Activated B cell treated with CpG ODN at 0.5 μM for 24 hours (primary cell): ENCODE measurements at regions of chr1 and their contacts with region 1.

Region 1: DNA sequence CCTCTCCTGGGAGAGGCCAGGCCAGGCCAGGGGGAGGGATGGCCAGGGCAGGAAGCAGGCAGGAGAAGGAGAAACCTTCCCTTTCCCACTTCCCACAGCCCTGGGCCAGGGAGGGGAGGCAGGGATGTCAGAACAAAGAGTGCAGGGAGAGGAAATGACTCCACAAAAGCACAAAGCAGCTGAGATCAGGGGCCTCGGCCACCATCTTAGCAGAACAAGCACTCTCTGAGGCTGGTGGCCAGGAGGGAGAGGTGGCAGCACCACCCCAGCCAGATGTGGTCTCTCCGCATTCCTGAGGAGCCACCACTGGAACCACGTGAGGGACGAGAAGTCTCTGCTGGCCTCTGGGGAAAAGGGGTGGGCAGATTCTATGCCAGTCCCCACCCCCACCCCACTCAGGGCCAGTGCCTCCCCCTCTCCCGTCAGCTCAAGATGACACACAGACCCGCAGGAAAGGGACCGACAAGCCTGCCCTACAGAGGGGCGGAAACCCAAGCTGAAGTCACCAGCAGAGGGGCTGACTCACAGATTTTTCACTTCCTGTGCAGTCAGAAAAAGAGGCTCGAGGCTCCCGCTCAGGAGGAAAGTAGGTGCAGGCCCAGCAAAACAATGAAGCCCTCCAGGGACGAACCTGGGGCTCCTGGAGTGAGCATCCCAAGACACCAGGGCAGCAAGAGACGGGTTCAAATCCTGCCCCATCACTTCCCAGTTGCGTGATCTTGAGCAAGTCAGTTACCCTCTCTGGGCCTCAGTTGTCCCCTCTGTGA is 24.1 kb upstream of the ALDH4A1 start:
- DNase-seq: peak; percentile 58
- ATAC-seq: peak; percentile 86
- H3K4me3 Mint-ChIP-seq: peak overlapping the region; percentile 79
- H3K27ac Mint-ChIP-seq: peak overlapping the region; percentile 95
- H3K4me1 Mint-ChIP-seq: peaks cover 74% of the 10 kb centered on the region
- H3K27me3 Mint-ChIP-seq: no peaks in the 10 kb centered on the region
- CTCF ChIP-seq: no peak

Region 2: DNA sequence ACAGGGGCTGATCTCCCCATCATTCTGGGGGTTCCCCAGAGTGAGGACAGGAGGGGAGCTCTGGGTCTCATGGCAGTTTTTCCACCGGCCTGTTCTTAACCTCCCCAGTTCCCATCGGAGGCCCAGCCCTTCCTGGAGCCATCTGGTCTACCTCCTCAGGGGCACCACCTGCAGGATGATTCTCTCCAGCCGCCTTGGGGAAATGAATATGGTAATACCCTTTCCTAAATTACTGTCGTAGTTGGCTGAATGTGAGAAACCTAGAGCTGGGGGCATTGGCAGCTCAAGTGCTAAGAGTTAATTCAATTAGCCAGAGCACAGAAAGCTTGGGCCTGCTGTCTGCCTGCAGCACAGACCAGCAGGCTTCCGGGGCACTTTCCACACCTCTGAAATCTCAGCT is 131.9 kb before region 1 on chr1:
- CTCF ChIA-PET with region 1: no interaction called
- POLR2A ChIA-PET with region 1: no interaction called
- intact Hi-C with region 1: no loop called
- DNase-seq: no peak
- ATAC-seq: no peak
- H3K4me3 Mint-ChIP-seq: no peak overlapping the region
- H3K27ac Mint-ChIP-seq: no peak overlapping the region
- H3K4me1 Mint-ChIP-seq: no peaks in the 10 kb centered on the region
- H3K27me3 Mint-ChIP-seq: peaks cover 27% of the 10 kb centered on the region
- CTCF ChIP-seq: no peak

Region 3: GRCh38 chr1:18907917-18908845 is 18.3 kb before region 1 on chr1:
- CTCF ChIA-PET with region 1: interaction called, 53 read pairs
- POLR2A ChIA-PET with region 1: interaction called, 13 read pairs
- intact Hi-C with region 1: loop called (anchors 1 kb)
- DNase-seq: no peak
- ATAC-seq: peak; percentile 69
- H3K4me3 Mint-ChIP-seq: peak overlapping the region; percentile 70
- H3K27ac Mint-ChIP-seq: peak overlapping the region; percentile 83
- H3K4me1 Mint-ChIP-seq: peaks cover 35% of the 10 kb centered on the region
- H3K27me3 Mint-ChIP-seq: no peaks in the 10 kb centered on the region
- CTCF ChIP-seq: no peak

Region 4: DNA sequence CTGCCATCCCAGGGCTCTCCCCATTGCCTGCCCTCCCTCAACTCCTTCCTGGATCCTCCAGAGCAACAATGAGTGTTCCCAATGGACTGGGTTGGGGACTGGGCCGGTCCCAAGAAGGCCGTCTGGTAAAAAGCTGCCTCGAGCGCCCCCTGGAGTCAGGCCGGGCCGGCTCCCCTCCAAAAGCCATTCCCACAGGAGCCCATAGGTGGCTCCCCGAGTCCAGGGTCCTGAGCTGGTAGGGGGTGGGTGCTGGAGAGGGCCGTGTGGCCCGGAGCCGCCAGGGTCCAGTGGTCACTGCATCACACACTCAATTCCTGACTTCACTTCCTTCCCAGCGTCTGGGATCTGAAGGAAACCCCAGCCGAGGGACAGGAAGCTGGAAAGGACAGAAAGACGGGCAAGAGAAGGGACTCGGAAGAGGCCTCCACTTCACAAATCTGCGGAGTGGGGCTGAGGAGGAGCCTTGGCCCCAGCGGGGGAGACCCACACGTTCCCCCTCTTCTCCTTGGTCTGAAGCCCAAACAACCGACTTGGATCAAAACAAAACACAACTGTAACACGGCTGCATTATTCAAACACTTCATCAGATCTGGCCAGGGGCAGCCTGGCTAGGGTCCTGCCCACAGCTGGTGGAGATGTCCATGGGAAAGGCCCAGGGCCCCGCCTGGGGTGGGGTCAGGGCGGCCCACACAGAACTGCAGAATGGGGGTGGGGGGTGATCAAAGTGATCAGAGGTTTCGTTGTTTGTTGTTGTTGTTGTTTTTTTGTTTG is 13.2 kb before region 1 on chr1:
- CTCF ChIA-PET with region 1: interaction called, 53 read pairs
- POLR2A ChIA-PET with region 1: interaction called, 11 read pairs
- intact Hi-C with region 1: loop called (anchors 1 kb)
- DNase-seq: peak; percentile 73
- ATAC-seq: peak; percentile 93
- H3K4me3 Mint-ChIP-seq: no peak overlapping the region
- H3K27ac Mint-ChIP-seq: no peak overlapping the region
- H3K4me1 Mint-ChIP-seq: peaks cover 18% of the 10 kb centered on the region
- H3K27me3 Mint-ChIP-seq: no peaks in the 10 kb centered on the region
- CTCF ChIP-seq: no peak

Region 5: GRCh38 chr1:18949686-18950400 is 23.3 kb after region 1 on chr1:
- CTCF ChIA-PET with region 1: interaction called, 27 read pairs
- POLR2A ChIA-PET with region 1: interaction called, 89 read pairs
- intact Hi-C with region 1: loop called (anchors 1 kb)
- DNase-seq: no peak
- ATAC-seq: no peak
- H3K4me3 Mint-ChIP-seq: peak overlapping the region; percentile 82
- H3K27ac Mint-ChIP-seq: peak overlapping the region; percentile 98
- H3K4me1 Mint-ChIP-seq: peaks cover 95% of the 10 kb centered on the region
- H3K27me3 Mint-ChIP-seq: no peaks in the 10 kb centered on the region
- CTCF ChIP-seq: no peak

Region 6: GRCh38 chr1:18972531-18972930 is 46.0 kb after region 1 on chr1:
- CTCF ChIA-PET with region 1: interaction called, 16 read pairs
- POLR2A ChIA-PET with region 1: interaction called, 3 read pairs
- intact Hi-C with region 1: no loop called
- DNase-seq: no peak
- ATAC-seq: peak; percentile 37
- H3K4me3 Mint-ChIP-seq: no peak overlapping the region
- H3K27ac Mint-ChIP-seq: no peak overlapping the region
- H3K4me1 Mint-ChIP-seq: no peaks in the 10 kb centered on the region
- H3K27me3 Mint-ChIP-seq: peaks cover 11% of the 10 kb centered on the region
- CTCF ChIP-seq: no peak